ENCODE measurements at regions of chr19 and their contacts with region 1.

Region 1: DNA sequence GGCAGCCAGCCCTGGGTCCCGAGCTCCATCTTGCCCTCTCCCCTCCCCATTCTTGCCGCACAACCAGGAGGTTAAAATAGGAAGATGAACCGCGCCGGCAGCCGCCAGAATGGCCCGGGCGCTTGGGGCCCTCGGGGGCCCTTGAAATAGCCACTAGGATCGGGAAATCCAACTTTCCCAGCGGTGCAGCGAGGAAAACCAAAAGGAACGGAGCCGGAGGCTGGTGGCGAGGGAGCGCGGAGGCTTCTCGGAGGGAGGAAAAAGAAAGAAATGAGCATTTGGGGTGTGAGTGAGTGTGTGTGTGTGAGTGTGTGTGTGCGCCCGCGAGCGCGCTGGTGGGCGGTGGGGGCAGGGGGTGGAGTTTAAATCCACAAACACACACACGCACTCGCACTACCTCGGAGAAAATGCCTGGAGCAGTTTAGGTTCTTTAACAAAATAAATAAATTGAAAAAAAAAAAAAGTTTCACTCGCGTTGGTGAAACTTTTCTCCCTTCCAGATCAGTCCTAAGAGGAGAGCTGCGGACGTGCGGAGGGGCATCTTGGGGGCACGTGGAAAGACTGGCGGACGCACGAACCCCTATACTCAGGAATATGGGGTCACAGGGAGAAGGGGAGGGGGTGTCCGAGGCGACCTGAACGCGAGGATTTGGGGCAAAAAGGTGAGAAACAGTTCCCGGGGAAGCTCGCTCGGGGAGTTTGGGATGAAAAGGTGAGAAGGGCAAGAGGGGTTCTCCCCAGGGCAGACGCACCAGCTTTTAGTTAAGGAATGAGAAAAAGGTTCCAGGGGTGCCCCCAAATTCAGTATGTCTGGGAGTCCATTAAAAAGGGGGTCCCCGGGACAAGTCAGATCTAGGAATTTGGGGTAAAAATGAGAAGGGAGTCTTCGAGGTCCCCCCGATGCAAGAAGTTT is 1.3 kb downstream of the RFX2 start:
- DNase-seq: peak; percentile 80 to 82
- H3K4me3 ChIP-seq: peak overlapping the region; percentile 57 to 92
- H3K27ac ChIP-seq: peak overlapping the region; percentile 91 to 94
- H3K4me1 ChIP-seq: peaks cover 0 to 9% of the 10 kb centered on the region in 2 donors
- H3K27me3 ChIP-seq: no peaks in the 10 kb centered on the region
- CTCF ChIP-seq: peak in 1 of 4 experiments; percentile 8
- POLR2A ChIP-seq: peak; percentile 18 to 59

Region 2: DNA sequence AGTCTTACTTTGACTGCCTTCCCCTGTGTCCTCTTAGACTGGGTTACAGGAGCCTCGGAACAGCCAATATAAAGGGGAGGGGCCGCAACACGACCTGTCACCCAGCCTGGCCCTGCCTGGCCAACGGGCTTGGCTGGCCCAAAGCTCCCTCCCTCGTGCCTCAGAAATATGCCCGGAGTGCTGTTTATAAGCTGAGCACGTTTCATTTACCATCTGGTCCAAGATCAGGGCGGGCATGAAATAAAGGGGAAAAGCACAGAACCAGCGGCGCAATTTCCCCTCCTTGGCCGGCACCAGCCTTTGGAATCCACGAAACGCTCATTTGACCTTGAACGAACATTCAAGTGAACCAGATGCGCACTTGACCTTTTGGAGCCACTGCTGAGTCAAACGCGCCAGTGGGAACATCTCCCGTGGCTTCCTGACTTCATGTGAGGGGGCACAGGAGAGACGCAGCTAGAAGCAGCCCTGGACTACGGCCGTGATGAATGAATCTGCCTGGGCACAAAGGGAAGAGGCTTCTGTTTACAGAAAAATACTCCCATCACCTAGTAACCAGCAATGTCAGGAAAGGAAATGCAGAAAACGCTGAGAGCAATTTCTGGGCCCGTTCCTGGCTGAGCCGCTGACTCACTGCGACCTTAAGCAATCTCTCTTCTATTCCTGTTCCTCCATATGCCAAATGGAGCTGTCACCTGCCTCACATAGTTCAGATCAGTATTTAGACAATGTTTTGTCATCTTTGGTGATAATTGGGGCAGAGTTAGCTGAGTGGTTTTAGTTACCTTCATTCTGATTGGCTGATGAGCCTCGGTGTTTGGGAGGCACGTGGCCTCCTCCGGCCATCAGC is 52.0 kb before region 1 on chr19:
- intact Hi-C with region 1: loop called (anchors 5 kb)
- DNase-seq: peak; percentile 87 to 91
- H3K4me3 ChIP-seq: no peak overlapping the region
- H3K27ac ChIP-seq: peak overlapping the region; percentile 93 to 95
- H3K4me1 ChIP-seq: peaks cover 37% of the 10 kb centered on the region in 2 donors
- H3K27me3 ChIP-seq: no peaks in the 10 kb centered on the region
- CTCF ChIP-seq: peak in 1 of 4 experiments; percentile 4
- POLR2A ChIP-seq: peak in 1 of 2 donors; percentile 35

Region 3: DNA sequence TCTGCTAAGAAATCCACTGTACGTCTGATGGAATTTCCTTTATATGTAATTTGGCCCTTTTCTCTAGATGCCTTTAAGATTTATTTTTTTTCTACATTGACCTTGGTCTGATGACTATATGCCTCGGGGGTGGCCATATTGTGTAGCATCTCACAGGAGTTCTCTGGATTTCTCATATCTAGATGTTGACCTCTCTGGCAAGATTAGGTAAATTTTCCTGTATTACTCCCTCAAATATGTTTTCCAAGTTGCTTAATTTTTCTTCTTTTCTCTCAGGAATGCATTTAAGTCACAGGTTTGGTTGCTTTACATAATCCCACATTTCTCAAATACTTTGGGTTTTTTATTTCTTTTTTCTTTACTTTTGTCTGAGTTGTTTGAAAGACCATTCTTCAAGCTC is 62.6 kb after region 1 on chr19:
- intact Hi-C with region 1: no loop called
- DNase-seq: no peak
- H3K4me3 ChIP-seq: no peak overlapping the region
- H3K27ac ChIP-seq: no peak overlapping the region
- H3K4me1 ChIP-seq: no peaks in the 10 kb centered on the region
- H3K27me3 ChIP-seq: no peaks in the 10 kb centered on the region
- CTCF ChIP-seq: no peak
- POLR2A ChIP-seq: no peak

Region 4: GRCh38 chr19:6249296-6249695 is 140.3 kb after region 1 on chr19:
- intact Hi-C with region 1: no loop called
- DNase-seq: no peak
- H3K4me3 ChIP-seq: no peak overlapping the region
- H3K27ac ChIP-seq: peak overlapping the region; percentile 22 to 58
- H3K4me1 ChIP-seq: peaks cover 7 to 17% of the 10 kb centered on the region in 2 donors
- H3K27me3 ChIP-seq: no peaks in the 10 kb centered on the region
- CTCF ChIP-seq: no peak
- POLR2A ChIP-seq: no peak